ENCODE measurements at regions of chr16 and their contacts with region 1.

Region 1: GRCh38 chr16:2398520-2398919 is 30.7 kb upstream of the CCNF start:
- DNase-seq: no peak
- H3K4me3 ChIP-seq: no peak overlapping the region
- H3K27ac ChIP-seq: no peak overlapping the region
- H3K4me1 ChIP-seq: no peaks in the 10 kb centered on the region
- H3K27me3 ChIP-seq: 0 out of 2 replicates have a peak, but pooled peaks cover 9% of the 10 kb centered on the region
- CTCF ChIP-seq: no peak

Region 2: GRCh38 chr16:2447920-2448583 is 49.5 kb after region 1 on chr16:
- CTCF ChIA-PET with region 1: no interaction called
- POLR2A ChIA-PET with region 1: interaction called, 15 read pairs
- intact Hi-C with region 1: no loop called
- DNase-seq: peak; percentile 86 to 90
- H3K4me3 ChIP-seq: peak overlapping the region; percentile 18; the same call in 1 of the 2 replicates
- H3K27ac ChIP-seq: peak overlapping the region; percentile 64
- H3K4me1 ChIP-seq: peaks cover 33% of the 10 kb centered on the region
- H3K27me3 ChIP-seq: no peaks in the 10 kb centered on the region
- CTCF ChIP-seq: no peak

Measured in PC-9 (cell line).